OCI-LY7 (cell line): ENCODE measurements at regions of chr3 and their contacts with region 1.

Region 1: GRCh38 chr3:101950985-101951737 is 101.8 kb downstream of the NFKBIZ start:
- DNase-seq: no peak
- H3K4me3 ChIP-seq: no peak overlapping the region
- H3K27ac ChIP-seq: no peak overlapping the region
- H3K4me1 ChIP-seq: no peaks in the 10 kb centered on the region
- CTCF ChIP-seq: no peak

Region 2: DNA sequence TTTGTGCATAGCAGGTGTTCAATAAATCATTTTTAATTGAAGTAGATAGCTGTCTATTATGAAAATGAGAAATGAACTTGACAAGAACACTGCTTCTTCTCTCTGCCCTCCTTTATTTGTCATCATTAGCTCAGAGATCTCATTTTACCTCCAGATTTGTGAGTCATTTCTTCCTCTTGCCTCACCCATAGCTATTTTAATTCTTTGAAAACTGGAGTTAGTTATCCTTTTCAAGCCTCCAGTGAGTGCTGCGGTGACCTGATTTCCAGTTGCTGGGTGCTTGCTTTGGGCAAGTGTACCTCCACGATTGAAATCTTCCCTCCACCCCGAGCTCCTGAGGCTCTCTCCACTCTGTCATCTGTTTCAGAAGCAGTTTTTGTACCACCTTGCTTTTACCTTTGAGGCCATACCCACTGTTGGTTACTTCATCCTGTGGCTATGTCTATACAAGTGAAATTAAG is 12.8 kb after region 1 on chr3:
- CTCF ChIA-PET with region 1: no interaction called
- POLR2A ChIA-PET with region 1: interaction called, 16 read pairs
- intact Hi-C with region 1: no loop called
- DNase-seq: no peak
- H3K4me3 ChIP-seq: no peak overlapping the region
- H3K27ac ChIP-seq: no peak overlapping the region
- H3K4me1 ChIP-seq: no peaks in the 10 kb centered on the region
- CTCF ChIP-seq: no peak

Region 3: DNA sequence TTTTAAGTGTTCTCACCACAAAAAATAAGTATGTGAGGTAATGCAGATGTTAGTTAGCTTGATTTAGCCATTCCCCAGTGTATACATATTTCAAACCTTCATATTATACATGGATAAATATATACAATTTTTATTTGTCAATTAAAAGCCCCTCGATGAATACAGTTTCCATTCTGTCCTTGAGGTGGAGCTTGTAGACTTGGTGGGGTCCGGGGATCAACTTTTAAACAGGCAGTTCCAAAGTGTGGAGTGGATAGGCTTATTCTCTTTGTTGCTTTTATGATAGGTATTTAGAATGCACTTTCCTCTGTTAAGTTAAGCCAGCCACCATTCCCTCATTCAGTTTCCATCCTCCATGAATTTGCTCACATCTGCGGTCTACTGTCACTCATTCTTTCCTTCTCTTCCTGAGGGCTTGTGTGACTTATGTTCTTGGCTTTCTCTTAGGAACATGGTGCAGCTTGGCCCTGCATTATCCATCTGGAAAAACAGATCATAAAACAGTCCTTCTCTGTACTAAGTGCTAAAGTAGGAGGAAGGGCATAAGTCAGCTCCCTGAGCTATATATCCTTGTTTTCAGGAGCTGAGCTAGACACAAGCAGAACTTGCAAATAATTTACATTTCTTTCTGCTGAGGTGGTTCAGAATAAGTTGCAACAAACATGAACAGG is 47.2 kb after region 1 on chr3:
- CTCF ChIA-PET with region 1: no interaction called
- POLR2A ChIA-PET with region 1: no interaction called
- intact Hi-C with region 1: no loop called
- DNase-seq: peak; percentile 24
- H3K4me3 ChIP-seq: no peak overlapping the region
- H3K27ac ChIP-seq: no peak overlapping the region
- H3K4me1 ChIP-seq: peaks cover 25% of the 10 kb centered on the region
- CTCF ChIP-seq: peak; percentile 51